Heart right ventricle (tissue), 16 donors: ENCODE measurements at regions of chr5 and their contacts with region 1.

Region 1: DNA sequence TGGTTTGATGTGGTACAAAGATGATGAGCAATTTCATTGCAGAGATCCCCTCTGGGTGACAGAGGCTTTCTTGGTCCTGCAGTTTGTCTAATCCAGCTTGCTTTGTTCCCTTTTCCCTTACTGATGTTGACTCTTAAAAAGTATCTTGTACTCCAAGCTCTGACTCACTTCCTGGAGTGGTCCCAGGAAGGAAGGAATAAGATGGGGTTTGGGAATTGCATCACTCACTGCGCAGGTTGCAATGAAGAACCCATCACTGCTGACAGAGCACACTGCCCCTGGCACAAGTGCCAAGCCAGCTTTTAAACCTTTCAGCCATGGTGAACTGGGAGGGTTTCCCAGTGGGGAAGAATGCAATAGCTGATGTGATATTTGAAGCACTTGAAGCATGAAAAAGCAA is 662.2 kb upstream of the CTNND2 start:
- DNase-seq: no peak
- ATAC-seq: no peak
- H3K4me3 ChIP-seq: no peak overlapping the region
- H3K27ac ChIP-seq: no peak overlapping the region
- H3K4me1 ChIP-seq: no peaks in the 10 kb centered on the region
- H3K27me3 ChIP-seq: no peaks in the 10 kb centered on the region
- CTCF ChIP-seq: no peak

Region 2: GRCh38 chr5:12522116-12522515 is 44.3 kb before region 1 on chr5:
- intact Hi-C with region 1: loop called in 1 of 10 experiments (anchors 2 kb)
- DNase-seq: no peak
- ATAC-seq: no peak
- H3K4me3 ChIP-seq: no peak overlapping the region
- H3K27ac ChIP-seq: no peak overlapping the region
- H3K4me1 ChIP-seq: no peaks in the 10 kb centered on the region
- H3K27me3 ChIP-seq: no peaks in the 10 kb centered on the region
- CTCF ChIP-seq: no peak

Region 3: DNA sequence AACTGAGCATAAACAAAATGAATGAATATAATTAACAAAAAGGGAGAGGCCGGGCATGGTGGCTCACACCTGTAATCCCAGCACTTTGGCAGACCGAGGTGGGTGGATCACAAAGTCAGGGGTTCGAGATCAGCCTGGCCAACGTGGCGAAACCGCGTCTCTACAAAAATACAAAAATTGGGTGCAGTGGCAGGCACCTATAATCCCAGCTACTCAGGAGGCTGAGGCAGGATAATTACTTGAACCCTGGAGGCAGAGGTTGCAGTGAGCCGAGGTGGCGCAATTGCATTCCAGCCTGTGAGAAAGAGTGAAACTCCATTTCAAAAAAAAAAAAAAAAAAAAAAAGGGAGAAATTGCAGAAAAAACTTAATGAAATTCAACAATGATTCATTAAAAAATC is 177.1 kb after region 1 on chr5:
- intact Hi-C with region 1: no loop called
- DNase-seq: no peak
- ATAC-seq: no peak
- H3K4me3 ChIP-seq: no peak overlapping the region
- H3K27ac ChIP-seq: no peak overlapping the region
- H3K4me1 ChIP-seq: no peaks in the 10 kb centered on the region
- H3K27me3 ChIP-seq: no peaks in the 10 kb centered on the region
- CTCF ChIP-seq: no peak